Heart left ventricle (tissue), 16 donors: ENCODE measurements at regions of chr21 and their contacts with region 1.

Region 1: GRCh38 chr21:37366482-37367316 is at the start of gene DYRK1A:
- DNase-seq: peak; percentile 98 to 99 (median 99)
- ATAC-seq: peak; percentile 91 to 98 (median 96)
- H3K4me3 ChIP-seq: peak within 1 kb of the TSS; percentile 77 to 96 (median 88)
- H3K27ac ChIP-seq: peak within 1 kb of the TSS; percentile 98 to 100 (median 100)
- H3K4me1 ChIP-seq: peaks cover 9 to 45% (median 35%) of the 10 kb centered on the region in 12 donors
- H3K27me3 ChIP-seq: no peaks in the 10 kb centered on the region
- CTCF ChIP-seq: peak in 2 of 12 donors; percentile 7 to 16
- POLR2A ChIP-seq: peak; percentile 19 to 59
- total RNA-seq, gene DYRK1A: 59.3 to 96.6 (median 72.1) TPM

Region 2: DNA sequence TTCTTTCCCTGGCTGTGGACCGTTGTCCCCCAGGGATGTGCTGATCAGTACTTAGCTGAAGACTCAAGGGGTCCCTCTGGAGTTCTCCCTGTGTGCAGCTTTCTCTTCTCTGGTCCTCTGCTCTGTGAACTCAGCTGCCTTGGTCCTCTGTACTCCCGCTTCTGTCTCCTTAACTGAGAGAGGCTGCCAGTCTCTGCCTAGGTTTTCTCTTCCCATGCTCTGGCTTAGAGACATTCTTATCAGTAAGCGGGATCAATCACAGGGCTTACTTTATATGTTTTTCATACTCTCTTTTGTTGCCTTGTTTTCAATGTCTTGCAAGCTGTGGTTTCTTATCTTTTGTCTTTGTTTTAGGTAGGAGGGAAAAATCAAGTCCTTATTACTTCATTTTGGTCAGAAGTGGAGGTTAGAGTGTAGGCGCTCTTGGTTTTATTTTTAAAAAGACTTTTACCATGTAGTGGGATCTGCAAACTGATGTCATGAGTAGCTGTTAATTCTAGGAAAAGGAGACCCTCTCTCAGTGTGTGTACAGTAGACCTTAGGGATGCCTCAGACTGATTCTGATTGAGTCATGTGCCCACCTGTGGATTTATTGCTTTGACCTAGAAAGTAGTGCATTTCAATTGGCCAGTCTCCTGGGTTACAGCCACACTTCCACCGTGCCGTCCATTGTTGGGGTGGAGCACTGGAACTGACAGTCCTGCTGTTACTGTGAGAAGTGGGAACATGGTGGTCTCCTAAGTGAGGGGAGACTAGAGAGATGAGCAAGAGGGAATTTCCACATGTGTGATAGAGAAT is 247.1 kb before region 1 on chr21:
- intact Hi-C with region 1: no loop called
- DNase-seq: no peak
- ATAC-seq: no peak
- H3K4me3 ChIP-seq: no peak overlapping the region
- H3K27ac ChIP-seq: no peak overlapping the region
- H3K4me1 ChIP-seq: no peaks in the 10 kb centered on the region
- H3K27me3 ChIP-seq: no peaks in the 10 kb centered on the region
- CTCF ChIP-seq: no peak
- POLR2A ChIP-seq: no peak

Region 3: GRCh38 chr21:37220981-37221664 is 145.6 kb before region 1 on chr21:
- intact Hi-C with region 1: loop called in 4 of 10 experiments (anchors 2 to 5 kb)
- DNase-seq: peak; percentile 95 to 97 (median 97)
- ATAC-seq: peak; percentile 96 to 98 (median 96)
- H3K4me3 ChIP-seq: peak overlapping the region; percentile 38 to 84 (median 70)
- H3K27ac ChIP-seq: peak overlapping the region; percentile 71 to 94 (median 86)
- H3K4me1 ChIP-seq: peaks cover 0 to 18% (median 10%) of the 10 kb centered on the region in 12 donors
- H3K27me3 ChIP-seq: no peaks in the 10 kb centered on the region
- CTCF ChIP-seq: peak; percentile 2 to 76 (median 50)
- POLR2A ChIP-seq: peak in 1 of 2 donors; percentile 65

Region 4: GRCh38 chr21:37253991-37254390 is 112.7 kb before region 1 on chr21:
- intact Hi-C with region 1: no loop called
- DNase-seq: no peak
- ATAC-seq: no peak
- H3K4me3 ChIP-seq: no peak overlapping the region
- H3K27ac ChIP-seq: no peak overlapping the region
- H3K4me1 ChIP-seq: peaks cover 3 to 56% (median 21%) of the 10 kb centered on the region in 12 donors
- H3K27me3 ChIP-seq: no peaks in the 10 kb centered on the region
- CTCF ChIP-seq: no peak
- POLR2A ChIP-seq: no peak

Region 5: GRCh38 chr21:37338671-37339551 is 27.8 kb before region 1 on chr21:
- intact Hi-C with region 1: loop called in 5 of 10 experiments (anchors 1 to 2 kb)
- DNase-seq: peak; percentile 62 to 86 (median 67)
- ATAC-seq: peak; percentile 97 to 98 (median 97)
- H3K4me3 ChIP-seq: peak overlapping the region in 2 of 12 donors; percentile 9 to 23
- H3K27ac ChIP-seq: peak overlapping the region; percentile 76 to 87 (median 82)
- H3K4me1 ChIP-seq: peaks cover 0 to 24% (median 15%) of the 10 kb centered on the region in 12 donors
- H3K27me3 ChIP-seq: no peaks in the 10 kb centered on the region
- CTCF ChIP-seq: no peak
- POLR2A ChIP-seq: no peak

Region 6: GRCh38 chr21:37429356-37429755 is 62.7 kb after region 1 on chr21:
- intact Hi-C with region 1: loop called in 2 of 10 experiments (anchors 5 to 10 kb)
- DNase-seq: no peak
- ATAC-seq: peak in 1 of 4 donors; percentile 8
- H3K4me3 ChIP-seq: no peak overlapping the region
- H3K27ac ChIP-seq: peak overlapping the region in 1 of 12 donors; percentile 8
- H3K4me1 ChIP-seq: peaks cover under 1 to 74% (median 55%) of the 10 kb centered on the region in 12 donors
- H3K27me3 ChIP-seq: no peaks in the 10 kb centered on the region
- CTCF ChIP-seq: no peak
- POLR2A ChIP-seq: no peak

Region 7: DNA sequence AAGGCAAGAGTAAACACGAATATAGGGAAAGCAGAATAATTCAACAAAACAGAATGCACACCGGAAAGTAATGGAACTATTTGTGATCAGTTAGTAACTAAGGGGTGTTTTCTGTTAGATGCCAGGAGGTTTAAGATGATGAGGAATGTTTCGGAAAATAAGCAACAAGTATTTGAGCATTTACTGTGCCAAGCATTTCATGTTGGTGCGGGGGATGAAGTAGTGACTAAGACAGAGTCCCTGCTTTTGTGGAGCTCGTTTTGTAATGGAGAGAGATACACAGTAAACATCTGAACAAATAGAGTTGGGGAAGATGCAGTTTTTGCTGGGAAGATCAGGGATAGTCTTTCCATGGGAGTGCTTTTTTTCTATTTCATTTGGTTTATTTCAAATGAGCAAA is 78.5 kb after region 1 on chr21:
- intact Hi-C with region 1: loop called in 1 of 10 experiments (anchors 10 kb)
- DNase-seq: no peak
- ATAC-seq: peak in 1 of 4 donors; percentile 32
- H3K4me3 ChIP-seq: no peak overlapping the region
- H3K27ac ChIP-seq: no peak overlapping the region
- H3K4me1 ChIP-seq: peaks cover 7 to 85% (median 60%) of the 10 kb centered on the region in 12 donors
- H3K27me3 ChIP-seq: no peaks in the 10 kb centered on the region
- CTCF ChIP-seq: no peak
- POLR2A ChIP-seq: no peak

Region 8: GRCh38 chr21:37484535-37485474 is 118.1 kb after region 1 on chr21:
- intact Hi-C with region 1: no loop called
- DNase-seq: no peak
- ATAC-seq: peak; percentile 36 to 65 (median 58)
- H3K4me3 ChIP-seq: no peak overlapping the region
- H3K27ac ChIP-seq: peak overlapping the region in 1 of 12 donors; percentile 37
- H3K4me1 ChIP-seq: peaks cover 0 to 17% (median 5%) of the 10 kb centered on the region in 12 donors
- H3K27me3 ChIP-seq: no peaks in the 10 kb centered on the region
- CTCF ChIP-seq: no peak
- POLR2A ChIP-seq: no peak